ENCODE measurements at regions of chr4 and their contacts with region 1.

Region 1: DNA sequence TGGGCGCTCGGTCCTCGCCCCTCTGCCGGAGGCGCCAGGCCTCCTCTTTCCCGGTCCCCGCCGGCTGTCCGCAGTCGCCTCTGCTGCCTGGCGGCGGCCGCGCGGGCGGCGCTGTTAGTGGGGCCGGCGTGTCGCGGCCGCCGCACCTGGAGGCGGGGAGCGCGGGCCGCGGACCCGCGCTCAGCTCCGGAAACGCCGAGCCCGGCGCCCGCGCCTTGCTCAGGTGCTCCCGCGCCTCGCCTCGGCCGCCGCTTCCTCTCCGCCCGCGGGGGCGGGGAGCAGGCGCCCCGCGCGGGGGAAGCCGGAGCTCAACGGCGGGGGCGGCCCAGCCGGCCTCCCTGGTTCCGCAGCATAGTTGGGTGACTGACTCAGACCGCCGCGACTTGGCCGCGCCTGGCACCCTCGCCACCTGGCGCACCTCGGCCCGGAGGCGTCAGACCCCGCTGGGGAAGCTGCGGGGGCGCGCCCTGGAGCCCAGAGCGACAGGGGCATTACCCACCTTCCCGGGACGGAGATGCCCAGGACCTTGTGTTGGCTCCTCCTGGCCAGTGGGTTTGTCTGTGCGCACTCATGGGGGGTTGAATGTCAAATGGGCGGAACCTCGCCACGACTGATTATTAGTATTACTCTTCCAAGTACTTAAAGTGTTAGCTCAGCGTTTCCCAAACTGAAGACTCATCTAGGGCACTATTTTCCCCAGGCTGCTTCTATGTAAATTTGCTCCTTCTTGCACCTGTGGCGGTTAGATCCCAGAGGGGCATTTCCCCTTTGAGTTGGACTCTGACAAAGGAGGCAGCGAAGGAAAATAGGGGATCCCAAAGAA is at the start of gene ARAP2:
- DNase-seq: peak; percentile 78
- ATAC-seq: peak; percentile 83
- H3K4me3 Mint-ChIP-seq: peak within 1 kb of the TSS; percentile 90
- H3K27ac Mint-ChIP-seq: peak within 1 kb of the TSS; percentile 91
- H3K4me1 Mint-ChIP-seq: peaks cover 52% of the 10 kb centered on the region
- H3K27me3 Mint-ChIP-seq: no peaks in the 10 kb centered on the region
- CTCF ChIP-seq: no peak
- total RNA-seq, gene ARAP2: 55.7 and 59.1 TPM in 2 replicates

Region 2: DNA sequence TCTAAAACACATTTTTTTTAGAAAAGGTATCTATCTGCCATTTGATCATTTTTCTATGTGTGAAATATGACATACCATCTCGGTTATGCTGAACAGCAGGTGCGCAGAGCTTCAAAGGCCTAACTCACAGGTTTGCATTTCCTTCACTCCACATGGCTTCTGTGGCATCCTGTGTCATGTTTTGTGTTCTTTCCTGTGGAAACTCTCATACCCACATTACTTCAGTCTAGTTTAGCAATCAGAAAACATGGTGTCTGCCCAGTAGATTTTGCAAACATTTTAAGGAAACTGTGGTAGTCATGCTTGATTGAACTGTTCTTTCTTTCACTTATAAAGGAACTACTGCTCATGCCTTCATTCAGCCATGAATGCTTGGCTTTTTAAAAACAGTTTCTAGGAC is 11.1 kb after region 1 on chr4:
- CTCF ChIA-PET with region 1: interaction called, 32 read pairs
- POLR2A ChIA-PET with region 1: interaction called, 60 read pairs
- intact Hi-C with region 1: loop called (anchors 1 kb)
- DNase-seq: no peak
- ATAC-seq: peak; percentile 90
- H3K4me3 Mint-ChIP-seq: peak overlapping the region; percentile 81
- H3K27ac Mint-ChIP-seq: peak overlapping the region; percentile 95
- H3K4me1 Mint-ChIP-seq: peaks cover 32% of the 10 kb centered on the region
- H3K27me3 Mint-ChIP-seq: no peaks in the 10 kb centered on the region
- CTCF ChIP-seq: no peak

Region 3: GRCh38 chr4:36320117-36320896 is 75.8 kb after region 1 on chr4:
- CTCF ChIA-PET with region 1: interaction called, 8 read pairs
- POLR2A ChIA-PET with region 1: interaction called, 13 read pairs
- intact Hi-C with region 1: loop called (anchors 2 kb)
- DNase-seq: no peak
- ATAC-seq: peak; percentile 47
- H3K4me3 Mint-ChIP-seq: peak overlapping the region; percentile 40
- H3K27ac Mint-ChIP-seq: peak overlapping the region; percentile 82
- H3K4me1 Mint-ChIP-seq: peaks cover 67% of the 10 kb centered on the region
- H3K27me3 Mint-ChIP-seq: no peaks in the 10 kb centered on the region
- CTCF ChIP-seq: no peak

Region 4: DNA sequence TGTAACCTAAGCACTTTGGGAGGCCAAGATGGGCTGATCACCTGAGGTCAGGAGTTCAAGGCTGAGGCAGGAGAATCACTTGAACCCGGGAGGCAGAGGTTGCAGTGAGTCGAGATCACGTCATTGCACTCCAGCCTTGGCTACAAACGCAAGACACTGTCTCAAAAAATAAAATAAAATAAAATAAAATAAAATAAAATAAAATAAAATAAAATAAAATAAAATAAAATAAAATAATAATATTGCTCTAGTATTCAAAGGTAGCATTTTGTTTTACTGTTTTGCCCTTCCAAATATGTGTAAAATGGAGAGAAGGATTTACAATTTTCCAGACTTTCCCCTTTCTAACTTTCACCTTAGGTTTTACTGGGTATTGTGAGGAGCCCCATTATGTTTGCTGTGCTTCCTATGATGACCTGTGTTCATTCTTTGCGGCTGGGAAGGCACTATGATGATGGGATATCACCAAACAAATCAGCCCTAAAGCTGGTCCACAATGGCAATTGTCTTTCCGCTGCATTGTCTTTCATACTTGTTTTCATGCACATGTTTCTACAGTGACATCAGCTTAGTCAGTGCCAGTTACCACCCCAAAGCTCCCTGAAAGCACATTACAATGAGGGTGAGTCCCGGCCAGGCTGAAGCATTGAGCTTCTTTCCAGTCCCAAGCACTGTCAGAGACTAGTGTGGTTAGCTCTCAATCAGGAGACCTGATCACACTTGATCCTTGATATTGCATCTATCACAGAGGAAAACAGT is 87.7 kb after region 1 on chr4:
- CTCF ChIA-PET with region 1: interaction called, 4 read pairs
- POLR2A ChIA-PET with region 1: interaction called, 11 read pairs
- intact Hi-C with region 1: no loop called
- DNase-seq: no peak
- ATAC-seq: peak; percentile 61
- H3K4me3 Mint-ChIP-seq: no peak overlapping the region
- H3K27ac Mint-ChIP-seq: peak overlapping the region; percentile 69
- H3K4me1 Mint-ChIP-seq: peaks cover 36% of the 10 kb centered on the region
- H3K27me3 Mint-ChIP-seq: no peaks in the 10 kb centered on the region
- CTCF ChIP-seq: no peak

Measured in activated B cell treated with CpG ODN at 0.5 μM for 24 hours (primary cell).